ENCODE measurements at regions of chr12 and their contacts with region 1.

Region 1: DNA sequence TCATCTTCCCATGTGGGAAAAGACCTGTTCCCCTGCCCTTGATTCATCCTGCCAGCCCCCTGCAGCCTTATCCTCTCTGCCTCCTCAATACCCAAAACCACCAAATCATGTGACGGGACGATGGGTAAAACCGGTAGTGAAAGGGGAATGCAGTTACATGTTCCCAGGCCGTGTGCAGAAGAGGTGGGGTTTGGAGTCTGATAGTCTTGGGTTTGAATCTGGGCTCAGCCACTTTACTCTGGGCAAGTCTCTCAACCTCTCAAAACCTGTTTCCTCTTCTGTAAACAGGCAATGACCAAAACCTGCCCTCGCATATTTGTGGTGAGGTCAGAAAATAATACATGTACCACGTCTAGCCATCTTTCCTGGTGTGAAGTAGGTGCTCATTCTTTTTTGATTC is 123.0 kb downstream of the PLXNC1 start:
- DNase-seq: no peak
- H3K4me3 ChIP-seq: no peak overlapping the region
- H3K27ac ChIP-seq: no peak overlapping the region
- H3K4me1 ChIP-seq: no peaks in the 10 kb centered on the region
- H3K27me3 ChIP-seq: no peaks in the 10 kb centered on the region
- CTCF ChIP-seq: no peak

Region 2: DNA sequence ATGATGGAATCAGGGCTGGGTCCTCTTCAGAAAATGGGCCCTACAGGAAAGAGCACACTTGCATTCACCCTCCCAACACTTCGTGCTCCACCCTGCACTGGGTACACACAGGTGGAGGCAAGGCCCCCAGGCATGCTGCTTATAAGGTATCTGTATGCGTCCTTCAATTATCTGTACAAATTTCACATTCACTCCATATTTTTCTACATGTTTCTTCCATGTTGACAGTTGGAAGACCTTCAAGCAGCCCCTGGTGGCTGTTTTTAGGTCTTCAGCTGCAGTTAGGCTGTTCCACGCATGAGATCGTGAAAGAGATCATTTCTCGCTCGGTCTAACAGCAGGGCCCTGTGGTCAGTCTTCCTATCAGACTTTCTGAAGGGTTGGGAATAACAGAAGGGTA is 75.9 kb before region 1 on chr12:
- CTCF ChIA-PET with region 1: no interaction called
- dilution Hi-C with region 1: loop called (anchors 5 kb)
- in situ Hi-C with region 1: no loop called
- intact Hi-C with region 1: no loop called
- DNase-seq: no peak
- H3K4me3 ChIP-seq: no peak overlapping the region
- H3K27ac ChIP-seq: no peak overlapping the region
- H3K4me1 ChIP-seq: no peaks in the 10 kb centered on the region
- H3K27me3 ChIP-seq: no peaks in the 10 kb centered on the region
- CTCF ChIP-seq: no peak

Region 3: DNA sequence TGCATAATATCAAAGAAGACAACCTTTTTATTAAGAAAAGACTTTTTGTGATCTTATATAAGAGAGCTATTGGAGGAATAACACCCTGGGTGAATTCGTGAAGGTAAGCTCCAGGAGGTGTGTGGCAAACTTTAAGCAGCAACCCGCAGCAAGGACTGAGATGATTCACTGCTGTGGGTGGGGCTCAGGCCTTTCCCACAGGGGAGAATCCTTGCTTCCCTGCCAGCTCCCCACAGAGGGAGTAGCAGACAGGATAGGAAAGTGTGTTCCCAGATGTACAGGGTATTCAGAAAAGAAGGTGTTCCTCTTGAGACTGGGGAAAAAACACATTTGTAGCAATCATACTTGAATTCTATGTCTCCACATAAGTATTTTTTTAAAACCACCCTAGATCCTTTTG is 723.0 kb after region 1 on chr12:
- CTCF ChIA-PET with region 1: no interaction called
- dilution Hi-C with region 1: no loop called
- in situ Hi-C with region 1: no loop called
- intact Hi-C with region 1: no loop called
- DNase-seq: peak; percentile 86
- H3K4me3 ChIP-seq: no peak overlapping the region
- H3K27ac ChIP-seq: peak overlapping the region; percentile 34
- H3K4me1 ChIP-seq: peaks cover 12% of the 10 kb centered on the region
- H3K27me3 ChIP-seq: no peaks in the 10 kb centered on the region
- CTCF ChIP-seq: peak in 1 of 2 donors; percentile 16